HepG2 (cell line): ENCODE measurements at regions of chr6 and their contacts with region 1.

Region 1: GRCh38 chr6:163405412-163406309 is 8.9 kb upstream of the QKI start:
- DNase-seq: peak; percentile 50
- ATAC-seq: peak; percentile 76
- H3K4me3 ChIP-seq: peak overlapping the region; percentile 62 to 77 (median 68)
- H3K27ac ChIP-seq: peak overlapping the region; percentile 34
- H3K4me1 ChIP-seq: peaks cover 72% of the 10 kb centered on the region
- H3K27me3 ChIP-seq: no peaks in the 10 kb centered on the region
- CTCF ChIP-seq: 0 out of 2 replicates have a peak, but pooled peaks have one; percentile 9
- EP300 ChIP-seq: peak in 1 of 2 experiments; percentile 23; a peak in 1 of 4 replicates
- POLR2A ChIP-seq: 0 out of 4 replicates have a peak, but pooled peaks of 1 of the 2 experiments have one; percentile 50
- RAD21 ChIP-seq: 0 out of 2 replicates have a peak, but pooled peaks have one; percentile 8

Region 2: GRCh38 chr6:163324411-163325389 is 81.0 kb before region 1 on chr6:
- CTCF ChIA-PET with region 1: no interaction called
- POLR2A ChIA-PET with region 1: no interaction called
- in situ Hi-C with region 1: no loop called
- intact Hi-C with region 1: loop called (anchors 5 kb)
- DNase-seq: peak; percentile 68
- ATAC-seq: peak; percentile 89
- H3K4me3 ChIP-seq: peak overlapping the region; percentile 21 to 34 (median 22); a peak in 4 of 6 replicates
- H3K27ac ChIP-seq: no peak overlapping the region
- H3K4me1 ChIP-seq: peaks cover 14% of the 10 kb centered on the region
- H3K27me3 ChIP-seq: 0 out of 5 replicates have a peak, but pooled peaks cover 0 to 2% of the 10 kb centered on the region in 2 experiments
- CTCF ChIP-seq: no peak
- EP300 ChIP-seq: no peak
- POLR2A ChIP-seq: no peak
- RAD21 ChIP-seq: no peak

Region 3: GRCh38 chr6:163965426-163966348 is 560.0 kb after region 1 on chr6:
- CTCF ChIA-PET with region 1: no interaction called
- POLR2A ChIA-PET with region 1: no interaction called
- in situ Hi-C with region 1: no loop called
- intact Hi-C with region 1: no loop called
- DNase-seq: no peak
- ATAC-seq: no peak
- H3K4me3 ChIP-seq: no peak overlapping the region
- H3K27ac ChIP-seq: no peak overlapping the region
- H3K4me1 ChIP-seq: no peaks in the 10 kb centered on the region
- H3K27me3 ChIP-seq: peaks cover 0 to 44% of the 10 kb centered on the region in 2 experiments; a peak in 3 of 5 replicates
- CTCF ChIP-seq: no peak
- EP300 ChIP-seq: no peak
- POLR2A ChIP-seq: no peak
- RAD21 ChIP-seq: no peak